ENCODE measurements at regions of chr1 and their contacts with region 1.

Region 1: GRCh38 chr1:181105134-181106021 is 16.9 kb downstream of the IER5 start:
- DNase-seq: peak; percentile 94

Region 2: GRCh38 chr1:181117638-181118449 is 12.5 kb after region 1 on chr1:
- CTCF ChIA-PET with region 1: no interaction called
- POLR2A ChIA-PET with region 1: interaction called, 33 read pairs
- DNase-seq: no peak